GM10248 (cell line): ENCODE measurements at regions of chr9 and their contacts with region 1.

Region 1: GRCh38 chr9:137034863-137035761 is 3.2 kb upstream of the FUT7 start:
- DNase-seq: peak; percentile 92
- CTCF ChIP-seq: peak; percentile 96

Region 2: GRCh38 chr9:136728080-136728547 is 307.0 kb before region 1 on chr9:
- CTCF ChIA-PET with region 1: no interaction called
- POLR2A ChIA-PET with region 1: no interaction called
- DNase-seq: peak; percentile 95
- CTCF ChIP-seq: peak; percentile 95

Region 3: GRCh38 chr9:136777359-136777758 is 257.8 kb before region 1 on chr9:
- CTCF ChIA-PET with region 1: interaction called, 16 read pairs
- POLR2A ChIA-PET with region 1: no interaction called
- DNase-seq: no peak
- CTCF ChIP-seq: no peak

Region 4: GRCh38 chr9:136944519-136945279 is 90.4 kb before region 1 on chr9 and contains the starts of genes C8G and FBXW5:
- CTCF ChIA-PET with region 1: interaction called, 126 read pairs
- POLR2A ChIA-PET with region 1: no interaction called
- DNase-seq: peak; percentile 100
- CTCF ChIP-seq: peak; percentile 95

Region 5: GRCh38 chr9:136991993-136992818 is 42.9 kb before region 1 on chr9 and contains the start of gene PAXX:
- CTCF ChIA-PET with region 1: interaction called, 18 read pairs
- POLR2A ChIA-PET with region 1: no interaction called
- DNase-seq: peak; percentile 99
- CTCF ChIP-seq: no peak

Region 6: DNA sequence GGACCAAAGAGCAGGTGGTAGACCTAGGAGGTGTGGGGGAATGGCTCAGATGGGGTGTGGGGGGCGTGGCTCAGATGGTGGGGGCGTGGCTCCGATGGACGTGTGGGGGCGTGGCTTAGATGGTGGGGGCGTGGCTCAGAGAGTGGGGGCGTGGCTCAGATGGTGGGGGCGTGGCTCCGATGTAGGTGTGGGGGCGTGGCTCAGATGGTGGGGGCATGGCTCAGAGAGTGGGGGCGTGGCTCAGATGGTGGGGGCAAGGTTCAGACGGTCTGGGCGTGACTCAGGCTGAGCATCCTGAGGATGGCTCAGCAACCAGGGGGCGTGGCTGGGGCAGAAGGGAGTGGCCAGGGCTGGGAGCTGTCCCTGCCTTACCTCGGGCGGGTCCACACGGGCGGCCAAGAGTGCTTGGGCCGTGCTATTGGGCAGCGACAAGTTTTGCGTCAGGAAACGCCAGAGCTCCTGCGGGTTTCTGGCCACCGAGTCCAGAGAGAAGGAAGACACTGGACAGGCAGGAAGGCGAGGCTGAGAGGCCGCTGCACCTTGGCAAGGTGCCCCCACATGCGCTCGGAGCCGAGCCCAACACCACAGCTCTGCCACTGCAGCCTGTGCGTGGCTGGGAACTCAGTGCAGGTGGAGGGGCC is 13.0 kb before region 1 on chr9:
- CTCF ChIA-PET with region 1: interaction called, 39 read pairs
- POLR2A ChIA-PET with region 1: no interaction called
- DNase-seq: peak; percentile 61
- CTCF ChIP-seq: no peak

Region 7: DNA sequence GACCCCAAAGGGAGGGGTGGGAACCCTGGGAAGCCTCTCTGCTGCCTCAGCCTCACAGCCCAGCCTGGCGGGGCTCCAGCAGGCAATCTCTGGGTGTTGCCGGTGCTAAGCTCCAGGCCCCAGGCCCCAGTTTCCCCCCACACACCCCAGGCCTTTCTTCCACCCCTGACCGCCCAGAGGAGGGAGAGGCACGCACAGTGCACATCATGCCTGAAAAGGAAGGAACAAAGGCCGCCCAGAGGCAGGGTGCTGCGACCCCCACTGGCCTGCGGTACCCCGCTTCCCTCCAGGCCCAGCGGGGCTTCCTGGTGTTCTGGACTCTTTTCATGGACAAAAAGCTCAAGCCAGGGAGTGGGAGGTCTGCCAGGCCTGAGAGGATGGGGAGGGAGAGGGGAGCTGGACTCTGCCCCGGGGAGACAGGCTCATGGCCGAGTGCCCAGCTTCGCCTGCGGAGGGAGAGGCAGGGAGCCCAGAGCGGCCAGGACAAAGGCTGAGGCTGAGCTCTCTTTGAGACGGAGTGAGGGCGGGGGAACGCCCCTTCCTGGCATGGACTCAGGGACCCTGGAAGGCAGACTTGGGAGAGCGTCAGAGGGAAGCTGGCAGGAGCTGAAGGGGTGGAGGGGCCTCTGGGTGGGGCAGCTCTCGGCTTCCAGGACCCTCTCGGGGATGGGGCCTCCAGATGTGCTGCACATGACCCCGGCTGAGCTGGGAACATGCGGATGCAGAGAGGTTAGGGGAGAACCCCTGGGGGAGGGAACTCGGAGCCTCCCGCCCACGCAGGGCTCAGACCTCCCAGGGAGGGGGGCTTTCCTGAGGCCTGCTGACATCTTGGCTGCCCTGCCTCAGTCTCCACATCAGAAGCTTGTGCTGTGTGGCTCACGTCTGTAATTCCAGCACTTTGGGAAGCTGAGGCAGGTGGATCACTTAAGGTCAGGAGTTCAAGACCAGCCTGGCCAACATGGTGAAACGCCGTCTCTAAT is 20.6 kb after region 1 on chr9:
- CTCF ChIA-PET with region 1: interaction called, 68 read pairs
- POLR2A ChIA-PET with region 1: no interaction called
- DNase-seq: no peak
- CTCF ChIP-seq: no peak

Region 8: DNA sequence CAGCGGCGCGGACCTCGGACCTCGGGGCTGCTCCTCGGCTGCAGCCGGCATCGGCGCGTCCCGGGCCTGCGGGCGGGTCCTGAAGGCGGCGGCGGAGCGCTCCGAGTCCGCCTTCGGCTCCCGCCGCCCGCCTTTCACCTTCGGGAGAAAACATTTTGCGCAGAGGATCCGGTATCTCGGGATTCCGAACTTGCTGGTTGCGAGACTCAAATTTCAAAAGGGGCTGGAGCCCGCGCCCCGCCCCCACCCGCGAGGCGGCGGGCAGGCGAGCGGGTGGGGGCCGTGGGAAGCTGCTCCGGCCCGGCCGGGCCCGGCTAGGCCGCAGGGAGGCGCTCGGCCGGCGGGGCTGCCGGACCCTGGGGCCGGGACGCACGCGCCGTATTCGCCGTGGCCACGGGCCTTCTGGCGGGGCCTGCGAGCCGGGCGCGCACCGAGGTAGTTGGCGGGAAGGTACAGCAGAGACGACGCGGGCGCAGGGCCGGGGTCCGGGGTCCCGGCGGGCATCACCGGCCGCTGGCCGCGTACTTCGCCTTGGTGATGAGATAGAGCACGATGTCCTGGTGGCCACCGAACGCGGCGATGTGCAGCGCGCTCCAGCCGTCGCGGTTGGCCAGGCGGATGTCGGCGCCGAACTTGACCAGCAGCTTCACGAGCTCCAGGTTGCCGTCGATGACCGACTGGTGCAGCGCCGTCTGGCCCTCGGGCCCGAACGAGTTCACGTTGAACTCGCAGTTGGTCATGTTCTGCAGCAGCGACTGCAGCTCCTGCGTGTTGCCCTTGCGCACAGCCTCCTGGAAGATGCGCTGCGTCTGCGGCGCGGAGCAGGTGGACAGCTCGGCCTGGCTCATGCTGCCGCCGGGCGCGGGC is 266.2 kb after region 1 on chr9:
- CTCF ChIA-PET with region 1: no interaction called
- POLR2A ChIA-PET with region 1: no interaction called
- DNase-seq: no peak
- CTCF ChIP-seq: peak; percentile 47

Region 9: DNA sequence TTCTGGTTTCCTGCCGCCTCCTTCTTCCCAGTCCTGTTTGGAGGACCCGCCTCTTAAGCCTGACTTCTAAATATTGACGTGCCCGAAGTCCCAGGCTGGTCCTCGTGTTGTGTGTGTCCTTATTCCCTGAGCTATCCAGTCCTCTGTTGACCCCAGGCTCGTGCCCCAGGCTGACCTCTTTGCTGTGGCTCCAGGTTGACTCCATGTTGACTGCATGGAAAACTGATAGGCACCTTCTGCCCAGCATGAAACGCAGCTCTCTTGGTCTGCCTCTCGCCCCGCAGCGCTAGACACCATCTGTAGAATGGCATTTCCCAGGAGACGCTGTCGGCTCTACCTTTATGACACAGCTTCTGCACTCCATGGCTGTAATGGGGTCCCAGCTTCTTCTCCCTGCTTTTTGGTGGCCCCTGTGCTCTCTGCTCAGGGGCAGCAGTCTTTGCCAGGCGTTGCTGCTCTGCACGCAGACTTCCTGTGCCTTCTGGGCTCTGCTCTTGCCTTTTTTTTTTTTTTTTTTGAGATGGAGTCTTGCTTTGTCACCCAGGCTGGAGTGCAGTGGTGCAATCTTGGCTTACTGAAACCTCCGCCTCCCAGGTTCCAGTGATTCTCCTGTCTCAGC is 612.1 kb after region 1 on chr9:
- CTCF ChIA-PET with region 1: no interaction called
- POLR2A ChIA-PET with region 1: no interaction called
- DNase-seq: no peak
- CTCF ChIP-seq: no peak